ENCODE measurements at regions of chr19 and their contacts with region 1.

Region 1: DNA sequence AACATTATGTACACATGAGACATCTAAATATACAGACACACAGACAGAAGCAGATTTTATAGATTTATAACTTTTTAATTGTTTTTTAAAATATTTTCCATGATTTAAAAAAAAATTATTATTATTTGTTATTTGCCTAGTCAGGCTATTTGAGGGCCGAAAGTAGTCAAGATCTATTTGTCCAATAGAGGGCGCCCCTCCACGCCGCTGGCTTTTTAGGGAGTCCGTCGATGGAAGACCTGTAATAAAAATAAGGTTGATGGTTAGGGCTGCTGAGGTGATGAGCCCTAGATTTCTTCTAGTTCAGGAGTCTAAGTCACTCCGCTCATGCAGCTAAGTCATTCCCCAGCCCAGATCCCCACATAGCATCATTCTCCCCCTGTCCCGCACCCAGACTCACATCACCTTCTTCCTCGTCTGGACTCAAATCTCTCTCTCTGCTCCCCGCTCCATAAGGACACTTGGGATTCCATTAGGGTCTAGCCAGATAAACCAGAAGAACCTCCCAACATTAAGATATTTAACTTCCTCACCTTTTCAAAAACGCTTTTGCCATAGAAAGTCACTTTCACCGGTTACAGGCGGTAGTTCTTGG is 33.9 kb upstream of the CEACAM21 start:
- DNase-seq: peak; percentile 56
- ATAC-seq: no peak
- H3K4me3 Mint-ChIP-seq: peak overlapping the region; percentile 70
- H3K27ac Mint-ChIP-seq: peak overlapping the region; percentile 57
- H3K4me1 Mint-ChIP-seq: peaks cover 59% of the 10 kb centered on the region
- H3K27me3 Mint-ChIP-seq: no peaks in the 10 kb centered on the region
- CTCF ChIP-seq: no peak

Region 2: DNA sequence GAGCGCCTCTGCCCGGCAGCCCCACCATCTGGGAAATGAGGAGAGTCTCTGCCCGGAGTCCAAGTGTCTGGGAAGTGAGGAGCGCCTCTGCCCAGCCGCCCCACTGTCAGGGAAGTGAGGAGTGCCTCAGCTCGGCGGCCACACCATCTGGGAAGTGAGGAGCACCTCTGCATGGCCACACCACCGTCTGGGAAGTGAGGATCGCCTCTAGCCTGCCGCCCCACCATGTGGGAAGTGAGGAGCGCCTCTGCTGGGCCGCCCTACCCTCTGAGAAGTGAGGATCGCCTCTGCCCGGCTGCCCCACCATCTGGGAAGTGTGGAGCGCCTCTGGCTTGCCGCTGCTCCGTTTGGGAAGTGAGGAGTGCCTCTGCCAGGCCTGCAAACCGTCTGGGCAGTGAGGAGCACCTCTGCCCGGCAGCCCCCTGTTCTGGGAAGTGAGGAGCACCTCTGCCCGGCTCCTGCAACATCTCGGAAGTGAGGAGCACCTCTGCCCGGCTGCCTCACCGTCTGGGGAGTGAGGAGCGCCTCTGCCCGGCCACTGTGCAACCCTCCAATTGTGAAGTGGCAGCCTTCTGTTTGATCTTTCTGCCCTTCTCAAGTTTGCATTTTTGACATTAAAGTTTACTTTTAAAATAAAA is 27.0 kb before region 1 on chr19:
- CTCF ChIA-PET with region 1: no interaction called
- POLR2A ChIA-PET with region 1: no interaction called
- intact Hi-C with region 1: loop called (anchors 1 kb)
- DNase-seq: no peak
- ATAC-seq: no peak
- H3K4me3 Mint-ChIP-seq: no peak overlapping the region
- H3K27ac Mint-ChIP-seq: no peak overlapping the region
- H3K4me1 Mint-ChIP-seq: peaks cover 22% of the 10 kb centered on the region
- H3K27me3 Mint-ChIP-seq: peaks cover 7% of the 10 kb centered on the region
- CTCF ChIP-seq: no peak

Region 3: GRCh38 chr19:41554907-41555306 is 12.8 kb after region 1 on chr19:
- CTCF ChIA-PET with region 1: interaction called, 14 read pairs
- POLR2A ChIA-PET with region 1: interaction called, 19 read pairs
- intact Hi-C with region 1: loop called (anchors 1 kb)
- DNase-seq: no peak
- ATAC-seq: no peak
- H3K4me3 Mint-ChIP-seq: peak overlapping the region; percentile 76
- H3K27ac Mint-ChIP-seq: peak overlapping the region; percentile 83
- H3K4me1 Mint-ChIP-seq: peaks cover 90% of the 10 kb centered on the region
- H3K27me3 Mint-ChIP-seq: no peaks in the 10 kb centered on the region
- CTCF ChIP-seq: no peak

Measured in activated B cell treated with CpG ODN at 0.5 μM for 24 hours (primary cell).